Dendritic cell treated with granulocyte-macrophage colony-stimulating factor and Interleukin-4, amounts not matched to agents 40 ng/mL and 50 ng/mL, for 4 days (primary cell): ENCODE measurements at regions of chr2 and their contacts with region 1.

Region 1: DNA sequence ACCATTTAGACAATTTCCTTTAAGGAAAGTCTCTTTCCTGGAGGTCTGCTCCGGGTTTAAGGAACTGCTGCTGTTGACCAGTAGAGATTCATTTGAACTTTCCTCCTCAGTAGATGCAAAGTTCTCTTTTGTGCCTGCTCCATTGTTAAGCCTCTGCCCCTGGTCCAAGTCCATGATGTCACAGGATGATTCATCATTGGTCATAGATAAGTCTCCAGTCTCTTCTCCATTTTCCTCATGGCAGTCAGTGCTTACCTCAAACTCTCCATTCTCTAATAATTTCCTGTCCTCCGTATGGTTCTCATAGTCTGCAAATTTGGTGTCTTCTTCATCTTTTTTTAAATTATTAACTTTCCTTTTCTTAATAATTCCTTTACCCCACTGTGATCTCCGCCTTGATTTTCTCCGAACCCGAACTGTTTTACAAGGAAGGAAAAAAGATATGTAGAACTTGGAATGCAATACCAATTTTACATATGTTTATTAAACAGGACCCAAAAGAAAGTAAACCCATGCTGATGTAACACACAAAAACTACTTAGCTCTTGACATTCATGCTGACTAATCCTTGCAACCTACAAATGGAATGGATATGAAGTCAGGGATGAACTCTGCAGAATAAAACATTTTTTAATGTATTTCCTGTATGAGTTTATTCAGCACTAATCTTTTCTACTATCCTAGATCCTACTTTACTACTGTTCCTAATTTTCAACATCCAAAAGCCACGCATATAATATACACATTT is 169.1 kb downstream of the ATAD2B start:
- H3K4me3 Mint-ChIP-seq: no peak overlapping the region
- H3K27ac Mint-ChIP-seq: no peak overlapping the region
- H3K4me1 Mint-ChIP-seq: peaks cover 19% of the 10 kb centered on the region
- H3K27me3 Mint-ChIP-seq: no peaks in the 10 kb centered on the region

Region 2: GRCh38 chr2:23636426-23636825 is 121.4 kb before region 1 on chr2:
- intact Hi-C with region 1: loop called (anchors 10 kb)
- H3K4me3 Mint-ChIP-seq: no peak overlapping the region
- H3K27ac Mint-ChIP-seq: no peak overlapping the region
- H3K4me1 Mint-ChIP-seq: no peaks in the 10 kb centered on the region
- H3K27me3 Mint-ChIP-seq: no peaks in the 10 kb centered on the region

Region 3: DNA sequence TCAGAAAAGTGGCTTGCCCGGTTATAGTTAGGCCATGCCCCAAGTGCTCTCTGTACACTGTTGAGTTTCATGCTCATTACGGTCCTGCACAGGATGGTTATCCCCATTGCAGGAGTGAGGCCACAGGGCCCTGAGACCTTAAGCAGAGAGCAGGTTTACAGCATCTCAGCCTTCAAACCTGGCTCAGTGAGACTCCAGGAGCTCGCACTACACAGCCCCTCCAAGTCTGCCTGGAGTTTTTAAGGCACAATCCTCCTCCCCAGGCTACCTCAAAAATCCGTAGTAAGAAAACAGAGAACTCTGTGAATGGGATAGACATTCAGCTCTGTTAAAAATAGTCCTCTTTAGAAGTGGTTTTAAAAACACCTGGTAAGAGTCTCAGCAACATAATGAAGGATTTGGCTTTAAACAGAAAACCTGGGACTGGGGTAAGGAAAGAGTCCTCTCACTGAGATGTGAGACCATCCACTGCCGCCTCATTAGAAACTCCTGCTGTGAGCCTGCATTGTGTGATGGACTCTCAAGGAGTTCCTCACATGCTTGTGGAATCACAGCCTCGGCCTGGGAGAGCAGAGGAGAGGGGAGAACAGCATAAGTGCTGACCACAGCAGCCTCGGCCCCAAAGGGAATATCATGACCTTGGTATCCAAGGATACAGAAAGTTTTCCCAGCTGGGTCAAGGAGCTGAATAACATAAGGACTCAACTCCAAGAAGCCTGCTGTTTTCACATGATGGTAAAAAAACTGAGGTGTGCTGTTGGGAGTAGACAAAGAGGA is 45.7 kb before region 1 on chr2:
- intact Hi-C with region 1: no loop called
- H3K4me3 Mint-ChIP-seq: no peak overlapping the region
- H3K27ac Mint-ChIP-seq: no peak overlapping the region
- H3K4me1 Mint-ChIP-seq: peaks cover 11% of the 10 kb centered on the region
- H3K27me3 Mint-ChIP-seq: no peaks in the 10 kb centered on the region

Region 4: DNA sequence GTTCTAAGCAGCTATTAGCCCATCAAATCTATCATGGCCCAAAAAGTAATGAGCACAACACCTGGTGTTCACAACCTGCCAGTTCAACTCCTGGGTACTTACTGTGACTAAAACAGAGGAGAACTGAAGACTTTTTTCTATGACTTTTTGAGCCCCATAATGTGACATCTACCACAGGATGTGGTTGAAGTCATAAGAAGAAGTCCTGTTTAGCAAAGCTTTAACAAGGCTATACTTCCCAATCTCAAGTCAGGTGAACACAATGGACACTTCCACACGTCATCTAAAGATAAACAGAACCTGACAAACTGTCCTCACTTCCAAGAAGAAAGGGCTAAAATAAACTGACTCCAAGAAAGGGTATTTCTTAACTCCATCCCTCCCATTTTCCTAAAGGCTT is 30.2 kb after region 1 on chr2:
- intact Hi-C with region 1: no loop called
- H3K4me3 Mint-ChIP-seq: no peak overlapping the region
- H3K27ac Mint-ChIP-seq: no peak overlapping the region
- H3K4me1 Mint-ChIP-seq: peaks cover 13% of the 10 kb centered on the region
- H3K27me3 Mint-ChIP-seq: no peaks in the 10 kb centered on the region